MCF 10A (cell line): ENCODE measurements at regions of chr11 and their contacts with region 1.

Region 1: GRCh38 chr11:62601394-62602140 is at the start of gene MTA2:
- DNase-seq: peak; percentile 98
- H3K4me3 Mint-ChIP-seq: peak within 1 kb of the TSS; percentile 86
- H3K27ac Mint-ChIP-seq: peak within 1 kb of the TSS; percentile 96
- H3K4me1 Mint-ChIP-seq: peaks cover 38% of the 10 kb centered on the region
- H3K27me3 Mint-ChIP-seq: no peaks in the 10 kb centered on the region
- CTCF ChIP-seq: no peak
- total RNA-seq, gene MTA2: 139 and 176 TPM in 2 replicates

Region 2: DNA sequence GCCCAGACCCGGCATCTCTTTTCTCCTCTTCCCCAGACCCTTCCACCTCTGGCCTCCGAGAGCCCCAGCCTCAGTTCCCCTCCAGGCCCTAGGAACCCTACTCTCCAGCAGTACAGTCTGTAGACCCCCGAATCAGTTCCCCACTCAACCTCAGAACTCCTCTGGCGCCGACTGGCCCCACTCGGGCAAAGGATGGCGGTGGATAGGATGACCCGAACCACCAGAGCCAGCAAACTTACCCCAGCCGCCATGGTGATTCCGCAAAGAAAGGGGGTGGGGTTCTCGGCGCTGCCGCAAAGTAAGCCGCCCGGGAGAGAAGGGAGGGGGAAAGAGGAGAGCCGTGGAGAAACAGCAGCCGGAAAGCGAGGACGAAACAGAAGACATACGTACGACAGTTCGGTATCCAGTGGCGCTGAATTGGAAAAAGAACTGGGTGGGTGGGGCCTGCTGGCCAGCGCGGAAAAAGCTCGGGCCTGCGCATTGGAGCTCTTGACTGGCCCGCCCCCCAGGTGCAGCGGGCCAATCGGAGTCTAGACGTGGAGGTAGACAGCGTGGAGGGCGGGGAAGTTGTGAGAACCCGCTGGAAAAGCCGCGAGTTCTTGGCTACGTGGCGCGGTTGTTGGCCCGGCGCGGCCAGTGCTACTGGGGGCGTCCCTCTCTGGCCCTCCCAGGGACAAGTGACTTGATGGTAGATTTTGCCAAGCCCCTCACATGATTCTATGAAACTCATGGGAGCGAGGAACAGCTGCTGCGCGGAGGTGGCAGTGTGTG is 27.8 kb before region 1 on chr11 and contains the start of gene EEF1G:
- CTCF ChIA-PET with region 1: no interaction called
- POLR2A ChIA-PET with region 1: interaction called, 46 read pairs
- intact Hi-C with region 1: no loop called
- DNase-seq: peak; percentile 100
- H3K4me3 Mint-ChIP-seq: peak within 1 kb of the TSS; percentile 100
- H3K27ac Mint-ChIP-seq: peak within 1 kb of the TSS; percentile 100
- H3K4me1 Mint-ChIP-seq: peaks cover 30% of the 10 kb centered on the region
- H3K27me3 Mint-ChIP-seq: no peaks in the 10 kb centered on the region
- CTCF ChIP-seq: no peak
- total RNA-seq, gene EEF1G: 1,510 and 1,855 TPM in 2 replicates

Region 3: GRCh38 chr11:62645956-62646824 is 44.6 kb after region 1 on chr11 and contains the start of gene GANAB:
- CTCF ChIA-PET with region 1: interaction called, 4 read pairs
- POLR2A ChIA-PET with region 1: interaction called, 11 read pairs
- intact Hi-C with region 1: no loop called
- DNase-seq: peak; percentile 99
- H3K4me3 Mint-ChIP-seq: peak within 1 kb of the TSS; percentile 95
- H3K27ac Mint-ChIP-seq: peak within 1 kb of the TSS; percentile 92
- H3K4me1 Mint-ChIP-seq: no peaks in the 10 kb centered on the region
- H3K27me3 Mint-ChIP-seq: no peaks in the 10 kb centered on the region
- CTCF ChIP-seq: no peak
- total RNA-seq, gene GANAB: 364 and 374 TPM in 2 replicates

Region 4: DNA sequence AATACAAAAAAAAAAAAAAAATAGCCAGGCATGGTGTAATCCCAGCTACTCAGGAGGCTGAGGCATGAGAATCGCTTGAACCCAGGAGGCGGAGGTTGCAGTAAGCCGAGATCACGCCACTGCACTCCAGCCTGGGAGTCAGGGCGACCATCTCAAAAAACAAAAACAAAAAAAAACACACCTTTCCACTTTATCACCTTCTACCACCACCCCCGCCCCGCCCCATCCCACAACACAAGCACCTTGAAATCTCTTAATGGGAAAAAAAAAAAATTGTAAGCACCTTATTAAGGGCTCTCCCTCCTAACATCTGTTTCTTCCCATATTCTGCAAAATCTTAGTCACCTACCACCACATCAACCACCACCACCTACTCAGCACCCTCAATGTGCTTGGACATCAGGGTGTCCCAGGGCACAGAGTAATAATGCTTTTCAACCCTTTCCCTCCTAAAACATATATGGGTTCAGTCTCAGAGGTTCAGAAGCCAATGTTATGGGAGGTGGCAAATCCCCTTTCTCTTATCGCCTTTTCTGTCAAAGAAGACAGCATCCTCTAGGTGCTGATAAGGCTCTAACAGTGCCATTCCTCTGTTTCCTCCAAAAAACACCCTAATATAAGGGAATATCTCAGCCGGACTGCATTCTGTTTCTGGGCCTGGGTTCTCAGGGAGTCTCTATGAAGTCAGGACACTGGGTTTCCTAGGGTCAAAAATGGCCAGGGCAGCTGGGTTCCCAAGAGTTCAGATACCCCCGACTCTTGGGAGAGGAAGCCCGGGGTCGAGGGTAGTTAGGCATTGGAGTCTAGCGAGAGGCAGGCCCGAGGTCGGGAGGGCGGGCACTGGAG is 50.8 kb after region 1 on chr11:
- CTCF ChIA-PET with region 1: interaction called, 4 read pairs
- POLR2A ChIA-PET with region 1: interaction called, 14 read pairs
- intact Hi-C with region 1: no loop called
- DNase-seq: no peak
- H3K4me3 Mint-ChIP-seq: peak overlapping the region; percentile 93
- H3K27ac Mint-ChIP-seq: peak overlapping the region; percentile 96
- H3K4me1 Mint-ChIP-seq: peaks cover 14% of the 10 kb centered on the region
- H3K27me3 Mint-ChIP-seq: no peaks in the 10 kb centered on the region
- CTCF ChIP-seq: no peak